Psoas muscle (tissue), 8 donors: ENCODE measurements at regions of chr11 and their contacts with region 1.

Region 1: DNA sequence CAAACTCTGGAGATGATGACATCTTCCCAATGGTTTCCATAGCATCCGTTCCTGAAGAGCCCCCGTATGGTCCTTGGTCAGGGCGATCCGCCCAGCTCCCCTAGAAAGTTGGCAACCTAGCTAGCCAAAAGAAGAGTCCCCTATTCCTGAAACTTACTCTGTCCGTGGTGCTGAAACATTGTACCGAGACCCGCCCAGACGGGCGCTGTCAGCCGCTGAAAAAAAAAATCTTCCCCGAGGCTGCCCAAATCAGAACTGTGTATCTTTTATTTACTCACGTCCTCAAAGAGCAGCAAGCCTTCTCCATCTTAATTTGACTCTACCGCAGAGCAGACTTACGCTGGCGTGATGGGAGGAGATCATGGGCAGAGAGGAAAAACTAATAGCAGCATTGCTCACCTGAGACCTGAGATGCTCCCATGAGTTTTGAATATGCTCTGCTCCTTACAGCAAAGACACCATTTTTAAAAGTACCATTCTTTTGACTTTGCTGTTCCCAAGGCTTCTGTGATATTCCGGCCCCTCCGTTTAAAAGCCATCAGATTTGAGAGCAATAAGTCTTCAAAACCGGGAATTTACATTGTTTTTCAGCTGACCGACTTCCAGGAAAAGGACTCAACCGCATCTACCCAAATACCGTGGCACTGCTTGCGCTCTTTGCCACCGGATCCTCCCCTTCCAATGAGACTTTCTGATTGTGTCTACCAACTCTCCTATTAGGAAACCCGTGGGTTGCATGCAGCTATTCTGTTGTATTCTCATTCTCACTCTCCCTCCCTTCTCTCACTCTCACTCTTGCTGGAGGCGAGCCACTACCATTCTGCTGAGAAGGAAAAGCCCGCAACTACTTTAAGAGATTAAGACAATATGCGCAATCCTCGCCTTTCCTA is at the start of gene SLC17A6:
- DNase-seq: no peak
- ATAC-seq: peak in 2 of 4 donors; percentile 51
- H3K4me3 ChIP-seq: no peak within 1 kb of the TSS
- H3K27ac ChIP-seq: no peak within 1 kb of the TSS
- H3K4me1 ChIP-seq: no peaks in the 10 kb centered on the region
- H3K27me3 ChIP-seq: peaks cover 6 to 49% (median 23%) of the 10 kb centered on the region in 3 donors
- CTCF ChIP-seq: no peak
- total RNA-seq, gene SLC17A6: not detected

Region 2: DNA sequence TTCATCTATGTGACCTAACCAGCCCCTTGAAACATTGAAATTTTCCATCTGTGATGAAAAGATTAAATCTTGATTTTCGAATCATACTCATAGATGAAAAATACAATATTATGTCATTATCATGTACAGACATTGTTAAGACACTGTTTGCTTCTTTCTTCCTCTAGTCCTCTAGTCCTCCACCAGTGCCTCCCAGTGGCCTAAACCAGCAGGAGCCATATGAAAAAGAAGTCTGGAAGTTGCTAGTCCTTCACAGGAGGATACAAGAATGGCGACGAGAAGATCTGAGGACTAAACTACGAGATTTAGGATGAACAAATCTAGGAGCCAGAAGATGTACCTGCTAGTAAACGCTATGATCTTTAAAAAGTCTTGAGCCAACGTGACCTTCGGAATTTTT is 134.5 kb after region 1 on chr11:
- intact Hi-C with region 1: loop called in 1 of 2 experiments (anchors 10 kb)
- DNase-seq: no peak
- ATAC-seq: no peak
- H3K4me3 ChIP-seq: no peak overlapping the region
- H3K27ac ChIP-seq: no peak overlapping the region
- H3K4me1 ChIP-seq: no peaks in the 10 kb centered on the region
- H3K27me3 ChIP-seq: no peaks in the 10 kb centered on the region
- CTCF ChIP-seq: peak; percentile 7

Region 3: GRCh38 chr11:22539821-22540256 is 202.0 kb after region 1 on chr11:
- intact Hi-C with region 1: loop called (anchors 2 kb)
- DNase-seq: no peak
- ATAC-seq: peak; percentile 71 to 86 (median 76)
- H3K4me3 ChIP-seq: no peak overlapping the region
- H3K27ac ChIP-seq: no peak overlapping the region
- H3K4me1 ChIP-seq: no peaks in the 10 kb centered on the region
- H3K27me3 ChIP-seq: no peaks in the 10 kb centered on the region
- CTCF ChIP-seq: peak; percentile 68

Region 4: DNA sequence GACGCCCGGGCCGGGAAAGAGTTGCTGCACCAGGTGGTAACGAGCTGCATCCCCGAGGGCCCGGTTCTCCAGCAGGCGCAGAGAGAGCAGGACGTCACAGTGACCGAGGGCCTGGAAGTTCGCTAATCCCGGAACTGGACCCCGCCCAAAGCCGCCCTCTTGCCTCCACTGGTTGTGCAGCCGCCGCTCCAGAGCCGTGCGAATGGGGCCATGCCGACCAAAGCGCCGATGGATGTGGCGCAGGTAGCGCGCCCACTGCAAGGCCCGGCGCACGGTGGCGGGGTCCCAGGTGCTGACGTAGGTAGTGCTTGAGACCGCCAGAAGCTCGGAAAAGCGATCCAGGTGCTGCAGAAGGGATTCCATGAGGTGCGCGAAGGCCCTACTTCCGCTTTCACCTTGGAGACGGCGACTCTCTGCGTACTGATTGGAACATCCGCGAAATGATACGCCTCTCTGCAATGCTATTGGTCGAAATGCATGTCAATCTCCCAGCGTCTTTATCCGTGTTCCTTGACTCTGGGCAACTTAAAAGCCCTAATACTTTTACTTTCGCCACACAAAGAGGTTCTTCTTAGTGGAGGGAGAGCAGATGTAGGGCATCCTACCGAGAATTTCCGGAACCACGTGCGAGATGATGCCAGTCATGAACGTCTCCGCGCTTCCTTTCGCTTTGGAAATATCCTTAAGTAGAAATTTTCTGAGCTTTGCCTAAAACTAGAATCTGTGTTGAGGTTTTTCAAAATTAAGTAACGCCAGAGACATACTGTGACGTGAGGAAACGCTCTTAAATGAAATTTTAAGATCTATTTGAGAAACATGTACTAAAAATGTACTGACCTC is 287.8 kb after region 1 on chr11 and contains the start of gene FANCF:
- intact Hi-C with region 1: loop called in 1 of 2 experiments (anchors 10 kb)
- DNase-seq: peak; percentile 87 to 92
- ATAC-seq: peak; percentile 98 to 99 (median 99)
- H3K4me3 ChIP-seq: peak within 1 kb of the TSS; percentile 89
- H3K27ac ChIP-seq: peak within 1 kb of the TSS; percentile 85
- H3K4me1 ChIP-seq: peaks cover 17% of the 10 kb centered on the region
- H3K27me3 ChIP-seq: no peaks in the 10 kb centered on the region
- CTCF ChIP-seq: no peak
- total RNA-seq, gene FANCF: 1.4 to 2.2 (median 1.7) TPM

Region 5: DNA sequence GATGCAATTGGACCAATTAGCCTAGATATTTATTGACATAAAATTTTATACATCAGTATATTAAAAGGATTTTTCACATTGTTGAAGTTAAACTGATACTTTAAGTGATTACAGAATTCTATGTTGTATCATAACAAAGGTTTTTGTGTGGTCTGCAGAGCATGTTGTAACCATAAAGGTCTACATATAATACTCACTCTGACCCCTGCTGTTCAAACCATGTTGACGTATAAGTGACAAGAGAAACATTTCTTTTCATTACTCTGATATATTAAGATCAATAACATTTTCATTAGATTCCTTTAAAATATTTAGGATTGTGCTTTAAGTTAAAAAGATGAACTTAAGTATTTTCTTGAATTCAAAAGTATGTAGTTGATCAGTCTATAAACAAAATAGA is 392.5 kb after region 1 on chr11:
- intact Hi-C with region 1: loop called in 1 of 2 experiments (anchors 2 kb)
- DNase-seq: no peak
- ATAC-seq: peak in 2 of 4 donors; percentile 58 to 60
- H3K4me3 ChIP-seq: no peak overlapping the region
- H3K27ac ChIP-seq: no peak overlapping the region
- H3K4me1 ChIP-seq: peaks cover 18% of the 10 kb centered on the region
- H3K27me3 ChIP-seq: no peaks in the 10 kb centered on the region
- CTCF ChIP-seq: peak; percentile 52

Region 6: GRCh38 chr11:22787551-22788162 is 449.8 kb after region 1 on chr11:
- intact Hi-C with region 1: loop called (anchors 2 to 5 kb)
- DNase-seq: no peak
- ATAC-seq: peak in 3 of 4 donors; percentile 49 to 80 (median 69)
- H3K4me3 ChIP-seq: no peak overlapping the region
- H3K27ac ChIP-seq: no peak overlapping the region
- H3K4me1 ChIP-seq: no peaks in the 10 kb centered on the region
- H3K27me3 ChIP-seq: no peaks in the 10 kb centered on the region
- CTCF ChIP-seq: peak; percentile 72